ENCODE measurements at regions of chr12 and their contacts with region 1.

Region 1: DNA sequence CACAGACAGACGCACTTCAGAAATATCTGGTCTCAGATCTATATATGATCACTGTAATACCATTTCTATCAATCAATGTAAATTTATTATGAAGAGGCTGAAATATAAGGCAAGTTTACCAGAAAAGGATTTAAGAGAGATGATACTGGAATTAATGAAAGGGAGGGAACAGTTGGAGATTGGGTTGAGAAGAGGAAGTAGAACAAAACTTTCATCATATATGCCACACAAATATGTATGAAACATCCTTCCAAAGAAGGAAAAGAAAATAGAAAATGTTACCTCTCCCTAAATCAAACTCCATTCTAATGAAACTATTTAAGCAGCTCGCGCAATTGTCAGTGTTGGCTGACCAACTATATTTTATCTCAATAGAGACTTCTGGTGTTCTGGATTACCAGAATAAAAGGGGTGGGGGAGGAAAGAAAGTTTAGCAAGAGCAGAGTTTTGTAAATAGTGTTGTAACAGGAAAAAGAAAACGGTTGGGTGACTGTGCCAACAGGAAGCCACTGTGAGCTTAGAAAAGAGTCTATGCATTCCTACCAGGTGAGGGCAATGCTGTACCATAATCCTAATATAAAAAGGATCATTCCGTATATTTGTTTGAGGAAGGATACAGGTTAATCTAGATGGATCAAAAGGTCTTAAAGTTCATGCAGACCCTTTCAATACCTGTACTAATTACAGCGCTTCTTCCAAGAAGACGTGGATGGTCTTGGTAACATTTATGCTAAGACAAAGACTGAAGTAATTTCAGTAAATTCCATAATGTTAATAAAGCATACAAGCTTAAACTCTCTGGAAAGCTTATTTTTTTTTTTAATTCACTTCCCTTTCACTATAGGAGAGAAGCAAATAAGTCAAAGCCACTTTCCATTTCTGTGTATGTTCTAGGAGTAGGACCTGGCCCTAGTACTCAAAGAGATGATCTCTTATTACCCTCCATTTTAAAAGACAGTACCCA is 14.5 kb upstream of the LLPH start:
- DNase-seq: peak; percentile 82
- H3K4me3 ChIP-seq: no peak overlapping the region
- H3K27ac ChIP-seq: peak overlapping the region; percentile 28
- H3K4me1 ChIP-seq: peaks cover 14% of the 10 kb centered on the region
- H3K27me3 ChIP-seq: no peaks in the 10 kb centered on the region

Region 2: GRCh38 chr12:65300680-65301349 is 844.3 kb before region 1 on chr12:
- in situ Hi-C with region 1: no loop called
- DNase-seq: peak; percentile 40
- H3K4me3 ChIP-seq: no peak overlapping the region
- H3K27ac ChIP-seq: no peak overlapping the region
- H3K4me1 ChIP-seq: peaks cover 25% of the 10 kb centered on the region
- H3K27me3 ChIP-seq: no peaks in the 10 kb centered on the region

Region 3: DNA sequence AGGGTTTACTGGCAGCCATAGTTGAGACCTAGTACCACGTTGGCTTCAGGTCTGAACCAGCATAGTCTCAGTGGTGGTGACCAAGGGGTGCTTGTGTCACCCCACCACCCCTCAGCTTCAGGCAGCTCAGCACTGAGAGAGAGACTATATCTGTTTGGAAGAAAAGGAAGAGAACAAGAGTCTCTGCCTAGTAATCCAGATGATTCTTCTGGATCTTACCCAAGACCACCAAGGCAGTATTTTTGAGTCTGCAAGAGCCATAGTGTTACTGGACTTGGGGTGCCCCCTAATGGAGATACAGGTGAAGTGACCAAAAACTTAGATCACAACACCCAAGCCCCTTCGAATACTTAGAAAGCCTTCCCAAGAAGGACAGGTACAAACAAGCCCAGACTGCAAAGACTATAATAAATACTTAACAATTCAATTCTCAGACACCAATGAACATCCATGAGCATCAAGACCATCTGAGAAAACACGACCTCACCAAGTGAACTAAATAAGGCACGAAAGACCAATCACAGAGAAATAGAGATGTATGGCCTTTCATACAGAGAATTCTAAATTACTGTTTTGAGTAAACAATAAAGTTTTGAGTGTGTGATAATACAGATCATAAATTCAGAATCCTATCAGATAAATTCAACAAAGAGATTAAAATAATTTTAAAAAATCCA is 264.3 kb after region 1 on chr12:
- in situ Hi-C with region 1: loop called (anchors 10 kb)
- DNase-seq: peak; percentile 62
- H3K4me3 ChIP-seq: no peak overlapping the region
- H3K27ac ChIP-seq: no peak overlapping the region
- H3K4me1 ChIP-seq: peaks cover 8% of the 10 kb centered on the region
- H3K27me3 ChIP-seq: no peaks in the 10 kb centered on the region

Measured in GM23248 (cell line).